Mammary epithelial cell (primary cell): ENCODE measurements at regions of chr10 and their contacts with region 1.

Region 1: GRCh38 chr10:35563261-35563891 is 41.8 kb upstream of the GJD4 start:
- DNase-seq: peak; percentile 45
- H3K4me3 ChIP-seq: no peak overlapping the region
- H3K27ac ChIP-seq: no peak overlapping the region
- H3K4me1 ChIP-seq: no peaks in the 10 kb centered on the region
- H3K27me3 ChIP-seq: no peaks in the 10 kb centered on the region
- CTCF ChIP-seq: peak; percentile 99 to 100

Region 2: GRCh38 chr10:35103882-35104281 is 459.5 kb before region 1 on chr10:
- CTCF ChIA-PET with region 1: no interaction called
- dilution Hi-C with region 1: no loop called
- in situ Hi-C with region 1: loop called in 1 of 2 experiments (anchors 25 kb)
- intact Hi-C with region 1: no loop called
- DNase-seq: no peak
- H3K4me3 ChIP-seq: no peak overlapping the region
- H3K27ac ChIP-seq: no peak overlapping the region
- H3K4me1 ChIP-seq: no peaks in the 10 kb centered on the region
- H3K27me3 ChIP-seq: peaks cover 2% of the 10 kb centered on the region
- CTCF ChIP-seq: no peak